GM12878 (cell line): ENCODE measurements at regions of chr5 and their contacts with region 1.

Region 1: DNA sequence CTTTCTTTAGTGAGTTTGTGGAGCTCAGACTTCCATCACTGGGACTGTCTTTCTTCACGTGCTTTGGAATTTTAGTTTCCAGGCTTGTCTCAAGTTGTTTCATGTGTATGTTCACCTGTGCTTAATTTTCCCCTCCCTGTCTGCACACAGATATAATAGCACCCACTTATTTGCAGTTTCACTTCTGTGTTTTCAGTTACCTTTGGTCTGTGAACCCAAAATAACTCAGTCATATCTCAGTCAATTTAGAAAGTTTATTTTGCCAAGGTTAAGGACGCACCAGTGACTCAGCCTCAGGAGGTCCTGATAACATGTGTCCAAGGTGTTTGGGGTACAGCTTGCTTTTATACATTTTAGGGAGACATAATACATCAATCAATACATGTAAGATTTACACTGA is 330.4 kb downstream of the ICE1 start:
- DNase-seq: peak; percentile 88
- ATAC-seq: peak; percentile 75
- H3K4me3 ChIP-seq: peak overlapping the region; percentile 34; the same call in 1 of the 2 replicates
- H3K27ac ChIP-seq: peak overlapping the region; percentile 57
- H3K4me1 ChIP-seq: peaks cover 56% of the 10 kb centered on the region
- H3K27me3 ChIP-seq: no peaks in the 10 kb centered on the region
- CTCF ChIP-seq: no peak
- EP300 ChIP-seq: peak; percentile 80 to 88; a peak in 3 of 4 replicates
- POLR2A ChIP-seq: no peak
- RAD21 ChIP-seq: no peak

Region 2: GRCh38 chr5:5492087-5492933 is 260.5 kb before region 1 on chr5:
- CTCF ChIA-PET with region 1: interaction called, 3 read pairs
- POLR2A ChIA-PET with region 1: no interaction called
- RAD21 ChIA-PET with region 1: no interaction called
- SMC1A ChIA-PET with region 1: no interaction called
- in situ Hi-C with region 1: no loop called
- intact Hi-C with region 1: loop called (anchors 10 kb)
- DNase-seq: peak; percentile 25
- ATAC-seq: peak; percentile 65
- H3K4me3 ChIP-seq: no peak overlapping the region
- H3K27ac ChIP-seq: no peak overlapping the region
- H3K4me1 ChIP-seq: no peaks in the 10 kb centered on the region
- H3K27me3 ChIP-seq: no peaks in the 10 kb centered on the region
- CTCF ChIP-seq: peak; percentile 67 to 78 (median 78)
- EP300 ChIP-seq: no peak
- POLR2A ChIP-seq: no peak
- RAD21 ChIP-seq: peak; percentile 91

Region 3: GRCh38 chr5:5710471-5710870 is 42.4 kb before region 1 on chr5:
- CTCF ChIA-PET with region 1: no interaction called
- POLR2A ChIA-PET with region 1: no interaction called
- RAD21 ChIA-PET with region 1: no interaction called
- SMC1A ChIA-PET with region 1: no interaction called
- in situ Hi-C with region 1: no loop called
- intact Hi-C with region 1: no loop called
- DNase-seq: no peak
- ATAC-seq: no peak
- H3K4me3 ChIP-seq: no peak overlapping the region
- H3K27ac ChIP-seq: no peak overlapping the region
- H3K4me1 ChIP-seq: no peaks in the 10 kb centered on the region
- H3K27me3 ChIP-seq: no peaks in the 10 kb centered on the region
- CTCF ChIP-seq: no peak
- EP300 ChIP-seq: no peak
- POLR2A ChIP-seq: no peak
- RAD21 ChIP-seq: no peak

Region 4: DNA sequence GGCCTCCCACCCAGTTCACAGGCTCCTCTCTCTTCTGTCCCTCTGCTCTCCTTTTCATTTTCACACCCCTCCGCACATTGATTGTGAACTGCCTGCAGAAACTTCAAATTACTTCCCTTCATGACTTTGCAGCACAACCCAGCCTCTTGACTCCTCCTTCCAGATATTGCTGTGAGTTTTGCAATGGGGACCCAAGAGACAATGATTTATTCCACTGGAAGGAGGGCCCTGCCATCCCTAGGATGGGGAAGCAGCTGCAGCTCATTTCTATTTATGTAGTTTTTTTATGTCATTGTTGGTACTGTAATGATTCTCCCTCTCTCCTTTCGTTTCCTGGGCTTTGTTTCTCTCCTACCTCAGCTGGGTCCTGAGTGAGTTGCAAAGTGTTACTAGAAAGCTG is 34.5 kb after region 1 on chr5:
- CTCF ChIA-PET with region 1: no interaction called
- POLR2A ChIA-PET with region 1: no interaction called
- RAD21 ChIA-PET with region 1: no interaction called
- SMC1A ChIA-PET with region 1: no interaction called
- in situ Hi-C with region 1: no loop called
- intact Hi-C with region 1: no loop called
- DNase-seq: no peak
- ATAC-seq: no peak
- H3K4me3 ChIP-seq: no peak overlapping the region
- H3K27ac ChIP-seq: no peak overlapping the region
- H3K4me1 ChIP-seq: no peaks in the 10 kb centered on the region; the same call in 1 of the 2 replicates
- H3K27me3 ChIP-seq: no peaks in the 10 kb centered on the region
- CTCF ChIP-seq: no peak
- EP300 ChIP-seq: no peak
- POLR2A ChIP-seq: no peak
- RAD21 ChIP-seq: no peak

Region 5: GRCh38 chr5:6377905-6378765 is 625.3 kb after region 1 on chr5 and contains the start of gene MED10:
- CTCF ChIA-PET with region 1: no interaction called
- POLR2A ChIA-PET with region 1: no interaction called
- RAD21 ChIA-PET with region 1: no interaction called
- SMC1A ChIA-PET with region 1: no interaction called
- in situ Hi-C with region 1: no loop called
- intact Hi-C with region 1: loop called (anchors 5 kb)
- DNase-seq: peak; percentile 75
- ATAC-seq: peak; percentile 97
- H3K4me3 ChIP-seq: peak within 1 kb of the TSS; percentile 99
- H3K27ac ChIP-seq: peak within 1 kb of the TSS; percentile 82
- H3K4me1 ChIP-seq: no peaks in the 10 kb centered on the region; the same call in 1 of the 2 replicates
- H3K27me3 ChIP-seq: no peaks in the 10 kb centered on the region
- CTCF ChIP-seq: no peak
- EP300 ChIP-seq: no peak
- POLR2A ChIP-seq: peak; percentile 96
- RAD21 ChIP-seq: no peak
- polyA plus RNA-seq, gene MED10: 37.1 to 49.5 TPM

Region 6: DNA sequence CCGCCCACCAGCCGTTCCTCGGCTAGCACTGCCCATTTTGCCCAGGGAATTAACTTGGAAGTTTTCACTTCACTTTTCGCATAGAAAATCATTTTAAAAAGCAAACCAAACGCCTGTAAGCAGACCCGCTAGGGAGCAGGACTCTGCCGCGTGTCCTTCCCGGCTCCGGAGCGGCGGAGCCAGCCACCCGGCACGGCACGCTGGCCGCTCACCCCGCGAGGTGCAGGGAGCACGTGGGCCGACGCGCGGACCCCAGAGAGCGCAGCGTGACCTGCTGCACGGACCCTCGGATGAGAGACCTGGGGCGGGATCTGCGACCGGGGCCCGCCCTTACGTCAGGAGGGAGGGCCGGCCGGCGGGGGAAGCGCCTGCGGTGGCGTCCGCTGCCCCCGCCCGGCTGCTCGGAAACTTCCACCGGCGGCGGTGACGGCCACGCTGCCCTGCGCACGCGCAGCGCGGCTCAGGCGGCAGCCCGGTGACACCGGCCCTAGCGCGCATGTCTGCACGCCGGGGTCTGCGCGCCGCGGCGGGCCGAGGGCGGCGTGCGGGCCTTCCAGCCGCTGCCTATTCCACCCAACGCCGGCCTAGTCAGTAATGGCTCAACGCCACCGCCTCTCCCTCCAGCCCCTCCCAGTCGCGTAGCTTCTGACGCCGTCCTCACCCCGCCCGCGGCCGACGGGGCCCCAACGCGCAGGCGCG is 959.9 kb after region 1 on chr5:
- CTCF ChIA-PET with region 1: no interaction called
- POLR2A ChIA-PET with region 1: no interaction called
- RAD21 ChIA-PET with region 1: no interaction called
- SMC1A ChIA-PET with region 1: no interaction called
- in situ Hi-C with region 1: no loop called
- intact Hi-C with region 1: loop called (anchors 10 kb)
- DNase-seq: peak; percentile 72
- ATAC-seq: peak; percentile 72
- H3K4me3 ChIP-seq: peak overlapping the region; percentile 85
- H3K27ac ChIP-seq: peak overlapping the region; percentile 93
- H3K4me1 ChIP-seq: peaks cover 26% of the 10 kb centered on the region
- H3K27me3 ChIP-seq: no peaks in the 10 kb centered on the region
- CTCF ChIP-seq: peak in 1 of 3 experiments; percentile 30; a peak in 2 of 6 replicates
- EP300 ChIP-seq: 0 out of 4 replicates have a peak, but pooled peaks of 1 of the 2 experiments have one; percentile 5
- POLR2A ChIP-seq: peak; percentile 75
- RAD21 ChIP-seq: no peak